ENCODE measurements at regions of chr12 and their contacts with region 1.

Region 1: DNA sequence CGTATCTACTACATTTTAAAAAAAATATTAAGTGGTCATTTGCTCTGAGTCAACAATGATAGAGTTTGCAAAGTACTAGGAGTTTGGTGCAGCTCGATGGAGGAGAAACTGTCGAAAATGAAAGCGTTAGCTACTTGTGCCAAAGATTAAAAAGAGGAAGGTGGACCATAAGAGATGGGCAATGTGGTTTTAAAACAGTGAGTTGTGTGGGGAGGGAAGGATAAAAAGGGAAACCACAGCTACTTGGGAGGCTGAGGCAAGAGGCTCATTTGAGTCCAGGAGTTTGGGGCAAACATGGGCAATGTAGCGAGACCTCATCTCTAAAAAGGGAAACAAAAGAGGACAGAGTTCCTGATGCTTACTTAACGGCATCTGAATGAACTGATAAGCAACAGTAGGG is 18.2 kb upstream of the STRAP start:
- DNase-seq: no peak
- ATAC-seq: no peak
- H3K4me3 ChIP-seq: no peak overlapping the region
- H3K27ac ChIP-seq: no peak overlapping the region
- H3K4me1 ChIP-seq: peaks cover 4% of the 10 kb centered on the region
- H3K27me3 ChIP-seq: no peaks in the 10 kb centered on the region
- CTCF ChIP-seq: no peak
- POLR2A ChIP-seq: no peak
- RAD21 ChIP-seq: no peak

Region 2: GRCh38 chr12:15532364-15532977 is 331.5 kb before region 1 on chr12:
- CTCF ChIA-PET with region 1: no interaction called
- POLR2A ChIA-PET with region 1: no interaction called
- dilution Hi-C with region 1: no loop called
- in situ Hi-C with region 1: loop called (anchors 10 kb)
- intact Hi-C with region 1: no loop called
- DNase-seq: peak; percentile 77
- ATAC-seq: peak; percentile 86
- H3K4me3 ChIP-seq: no peak overlapping the region
- H3K27ac ChIP-seq: no peak overlapping the region
- H3K4me1 ChIP-seq: peaks cover 5% of the 10 kb centered on the region; the same call in 1 of the 2 replicates
- H3K27me3 ChIP-seq: no peaks in the 10 kb centered on the region
- CTCF ChIP-seq: peak; percentile 80
- POLR2A ChIP-seq: no peak
- RAD21 ChIP-seq: peak; percentile 84